Right lobe of liver (tissue), 6 donors: ENCODE measurements at regions of chr6 and their contacts with region 1.

Region 1: GRCh38 chr6:53504512-53504911 is 40.4 kb downstream of the GCLC start:
- DNase-seq: peak; percentile 22 to 61 (median 52)
- ATAC-seq: peak; percentile 68 to 84 (median 76)
- H3K4me3 ChIP-seq: no peak overlapping the region
- H3K27ac ChIP-seq: no peak overlapping the region
- H3K4me1 ChIP-seq: peaks cover 0 to 8% (median 4%) of the 10 kb centered on the region in 4 donors
- H3K27me3 ChIP-seq: no peaks in the 10 kb centered on the region
- CTCF ChIP-seq: no peak
- POLR2A ChIP-seq: no peak

Region 2: DNA sequence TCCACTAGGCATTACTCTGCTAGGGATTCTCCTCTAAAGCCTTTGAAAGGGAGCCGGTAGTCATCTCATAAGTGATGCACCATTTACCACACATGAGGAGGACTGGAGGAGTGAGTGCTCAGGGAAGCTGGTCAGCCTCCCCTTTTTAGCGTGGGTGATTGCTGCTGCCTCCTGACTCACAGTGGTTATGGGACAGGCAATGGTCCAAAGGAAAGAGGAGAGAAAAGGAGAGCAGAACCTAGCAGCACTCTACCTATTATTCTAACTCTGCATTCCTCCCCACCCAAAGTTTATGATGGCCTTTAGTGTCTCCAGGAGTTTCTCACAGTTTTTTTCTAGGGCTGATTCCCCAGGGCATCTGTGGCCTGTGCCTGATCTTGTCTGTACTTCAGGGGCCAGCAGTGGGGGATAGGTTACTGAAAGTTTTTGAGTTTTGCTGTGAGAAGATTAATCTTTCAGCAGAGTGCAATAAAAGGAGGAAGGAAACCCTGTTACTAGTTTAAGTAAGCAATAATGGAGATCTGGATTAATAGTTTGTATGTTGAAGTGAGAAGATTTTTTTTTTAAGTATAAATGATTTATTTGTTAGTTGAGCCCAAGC is 76.8 kb after region 1 on chr6:
- intact Hi-C with region 1: no loop called
- DNase-seq: no peak
- ATAC-seq: peak in 1 of 4 donors; percentile 26
- H3K4me3 ChIP-seq: no peak overlapping the region
- H3K27ac ChIP-seq: no peak overlapping the region
- H3K4me1 ChIP-seq: no peaks in the 10 kb centered on the region
- H3K27me3 ChIP-seq: no peaks in the 10 kb centered on the region
- CTCF ChIP-seq: no peak
- POLR2A ChIP-seq: no peak

Region 3: GRCh38 chr6:53664623-53665022 is 160.1 kb after region 1 on chr6:
- intact Hi-C with region 1: loop called in 1 of 2 experiments (anchors 10 kb)
- DNase-seq: no peak
- ATAC-seq: no peak
- H3K4me3 ChIP-seq: no peak overlapping the region
- H3K27ac ChIP-seq: no peak overlapping the region
- H3K4me1 ChIP-seq: no peaks in the 10 kb centered on the region
- H3K27me3 ChIP-seq: no peaks in the 10 kb centered on the region
- CTCF ChIP-seq: no peak
- POLR2A ChIP-seq: no peak